Dorsolateral prefrontal cortex (tissue), 120 donors: ENCODE measurements at regions of chr20 and their contacts with region 1.

Region 1: DNA sequence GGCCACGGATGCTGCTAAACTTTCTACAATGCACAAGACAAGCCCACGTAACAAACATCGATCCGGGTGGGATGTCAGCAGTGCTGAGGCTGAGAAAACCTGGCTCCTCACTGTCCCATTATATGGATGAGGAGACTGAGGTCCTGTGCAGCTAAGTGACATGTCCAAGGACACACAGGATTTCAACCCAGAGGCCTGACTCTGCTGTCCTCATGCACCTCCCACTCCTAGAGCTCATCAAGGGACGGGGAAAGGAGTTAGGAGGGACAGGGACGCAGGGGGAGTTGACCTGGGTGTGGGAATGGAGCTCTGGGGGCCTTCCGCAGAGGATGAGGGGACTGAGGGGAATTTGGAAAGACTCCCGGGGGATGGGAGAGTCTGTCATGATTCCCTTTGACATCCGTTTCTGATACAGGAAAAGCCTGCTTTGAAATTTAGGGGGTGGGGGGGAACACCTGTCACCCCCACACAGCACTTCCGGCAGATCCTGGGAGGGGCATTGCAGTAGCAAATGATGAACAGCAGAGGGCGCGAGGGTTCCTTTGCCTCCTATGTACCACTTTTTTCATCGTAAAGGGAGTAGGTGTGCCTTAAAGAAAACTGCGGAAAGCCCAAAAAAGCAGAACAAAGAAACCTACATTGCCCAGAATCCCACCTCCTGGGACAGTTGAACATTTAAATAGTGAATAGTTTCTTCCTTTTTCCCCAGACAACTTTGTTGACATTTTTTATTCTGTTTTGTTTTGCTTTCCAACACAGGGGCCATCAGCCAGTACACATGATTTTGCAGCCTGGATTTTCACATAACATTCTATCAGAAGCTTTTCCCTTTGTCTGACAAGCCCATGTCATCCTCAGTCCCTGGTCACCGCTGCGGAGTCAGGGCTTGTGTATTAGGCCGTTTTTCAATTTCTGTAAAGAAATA is 48.6 kb downstream of the SLC2A10 start:
- DNase-seq: peak in 7 of 10 donors; percentile 12 to 55 (median 47)
- H3K4me3 ChIP-seq: peak overlapping the region in 1 of 59 donors; percentile 30
- H3K27ac ChIP-seq: no peak overlapping the region
- H3K27me3 ChIP-seq: no peaks in the 10 kb centered on the region
- CTCF ChIP-seq: peak; percentile 55 to 95 (median 88)

Region 2: DNA sequence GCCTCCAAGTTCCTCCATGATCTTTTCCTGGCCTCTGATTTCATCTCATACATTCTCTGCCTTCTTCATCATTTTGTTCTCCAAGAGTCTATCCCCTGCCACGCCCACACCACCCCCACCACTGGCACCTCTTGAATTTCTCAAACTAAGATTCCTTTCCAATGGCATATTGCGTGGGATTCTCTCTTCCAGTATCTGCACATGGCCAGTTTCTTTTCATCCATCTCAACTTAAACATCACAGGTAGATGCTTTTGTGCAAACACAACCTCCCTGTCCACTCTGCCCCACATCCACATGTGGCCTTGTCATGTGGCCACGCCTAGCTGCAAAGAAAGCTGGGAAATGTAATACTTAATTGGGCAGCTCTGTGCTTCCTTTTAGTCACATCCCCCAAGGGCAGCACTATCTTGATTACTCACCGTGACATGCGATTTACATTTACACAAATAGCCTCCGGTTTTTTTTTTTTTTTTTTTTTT is 631.9 kb after region 1 on chr20:
- intact Hi-C with region 1: loop called in 1 of 2 experiments (anchors 10 kb)
- DNase-seq: peak in 1 of 10 donors; percentile 54
- H3K4me3 ChIP-seq: no peak overlapping the region
- H3K27ac ChIP-seq: no peak overlapping the region
- H3K27me3 ChIP-seq: no peaks in the 10 kb centered on the region
- CTCF ChIP-seq: no peak